Activated CD8-positive, alpha-beta T cell treated with anti-CD3 and anti-CD28 coated beads for 36 hours (primary cell): ENCODE measurements at regions of chr18 and their contacts with region 1.

Region 1: GRCh38 chr18:35231052-35231451 is 9.8 kb upstream of the ZNF397 start:
- DNase-seq: peak; percentile 87
- ATAC-seq: peak; percentile 91
- H3K4me3 Mint-ChIP-seq: peak overlapping the region; percentile 63
- H3K27ac Mint-ChIP-seq: no peak overlapping the region
- H3K4me1 Mint-ChIP-seq: peaks cover 3% of the 10 kb centered on the region
- H3K27me3 Mint-ChIP-seq: no peaks in the 10 kb centered on the region
- CTCF ChIP-seq: peak; percentile 95

Region 2: DNA sequence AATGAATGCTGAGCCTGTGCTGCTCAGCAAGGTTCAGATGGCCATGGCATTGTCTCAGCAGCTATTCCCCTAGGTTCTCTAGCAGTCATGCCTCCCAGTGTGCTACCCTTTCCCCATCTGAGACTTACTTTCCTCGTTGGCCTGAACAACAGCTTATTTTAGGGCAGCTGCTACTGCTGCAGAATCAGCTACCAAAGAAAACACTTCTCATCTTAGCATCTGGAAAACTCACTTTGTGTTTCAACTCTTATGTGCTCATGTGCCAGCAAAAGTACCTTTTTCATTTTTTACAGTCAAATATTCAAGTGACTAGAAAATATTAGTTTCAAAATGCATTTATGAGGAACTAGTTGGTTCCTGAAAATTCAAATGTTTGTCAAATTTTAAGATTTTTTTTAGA is 50.6 kb before region 1 on chr18:
- CTCF ChIA-PET with region 1: no interaction called
- POLR2A ChIA-PET with region 1: no interaction called
- intact Hi-C with region 1: no loop called
- DNase-seq: no peak
- ATAC-seq: no peak
- H3K4me3 Mint-ChIP-seq: no peak overlapping the region
- H3K27ac Mint-ChIP-seq: no peak overlapping the region
- H3K4me1 Mint-ChIP-seq: no peaks in the 10 kb centered on the region
- H3K27me3 Mint-ChIP-seq: no peaks in the 10 kb centered on the region
- CTCF ChIP-seq: no peak

Region 3: GRCh38 chr18:35355140-35355618 is 124.1 kb after region 1 on chr18:
- CTCF ChIA-PET with region 1: interaction called, 41 read pairs
- POLR2A ChIA-PET with region 1: no interaction called
- intact Hi-C with region 1: loop called (anchors 1 kb)
- DNase-seq: peak; percentile 75
- ATAC-seq: peak; percentile 98
- H3K4me3 Mint-ChIP-seq: no peak overlapping the region
- H3K27ac Mint-ChIP-seq: no peak overlapping the region
- H3K4me1 Mint-ChIP-seq: peaks cover 4% of the 10 kb centered on the region
- H3K27me3 Mint-ChIP-seq: no peaks in the 10 kb centered on the region
- CTCF ChIP-seq: peak; percentile 48